ENCODE measurements at regions of chr12 and their contacts with region 1.

Region 1: GRCh38 chr12:53198486-53199110 is 8.5 kb downstream of the ITGB7 start:
- DNase-seq: no peak
- ATAC-seq: no peak
- H3K4me3 ChIP-seq: no peak overlapping the region
- H3K27ac ChIP-seq: no peak overlapping the region
- H3K4me1 ChIP-seq: no peaks in the 10 kb centered on the region
- H3K27me3 ChIP-seq: peaks cover 0 to 3% (median 0%) of the 10 kb centered on the region in 3 donors
- CTCF ChIP-seq: no peak

Region 2: DNA sequence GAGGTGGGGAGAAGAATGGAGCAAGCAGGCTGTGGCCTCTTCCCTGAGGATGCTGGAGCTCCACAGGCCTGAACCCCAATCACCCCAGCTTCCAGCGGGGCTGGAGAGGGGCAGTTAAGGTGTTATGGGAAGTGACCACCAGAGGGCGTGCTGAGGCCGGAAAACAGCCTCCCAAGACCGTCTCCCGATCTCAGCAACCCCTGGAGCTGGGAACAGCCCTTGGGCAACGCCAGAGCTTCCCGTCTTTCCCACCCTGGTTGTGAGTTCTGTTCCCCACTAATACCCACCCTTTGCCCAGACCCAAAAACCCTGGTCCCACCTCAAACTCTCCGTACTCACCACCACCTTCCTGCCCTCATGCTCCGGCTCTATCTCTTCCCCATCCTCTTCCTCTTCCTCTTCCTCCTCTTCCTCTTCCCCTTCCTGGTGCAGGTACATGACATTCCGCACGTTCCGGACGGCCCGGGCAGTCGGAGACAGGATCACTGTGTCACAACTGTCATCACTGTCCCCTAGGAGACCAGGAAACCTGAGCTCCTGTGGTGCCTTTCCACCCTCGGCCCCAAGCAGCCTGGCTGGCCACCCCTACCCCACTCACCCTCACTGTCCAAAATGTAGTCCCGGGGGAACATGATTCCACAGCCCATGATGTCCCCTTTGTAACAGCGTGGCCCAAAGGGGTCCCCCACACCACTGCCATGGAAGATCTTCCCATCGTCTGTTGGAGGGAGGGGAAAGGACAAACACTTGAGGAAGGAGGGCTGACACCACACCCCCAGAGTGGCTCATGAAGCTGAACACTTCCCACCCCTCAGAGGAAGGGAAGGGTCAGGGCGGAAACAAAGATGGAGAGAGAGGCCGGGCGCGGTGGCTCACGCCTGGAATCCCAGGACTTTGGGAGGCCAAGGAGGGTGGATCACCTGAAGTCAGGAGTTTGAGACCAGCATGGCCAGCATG is 132.3 kb before region 1 on chr12:
- intact Hi-C with region 1: loop called (anchors 1 to 5 kb)
- DNase-seq: peak; percentile 82 to 93
- ATAC-seq: peak; percentile 64 to 76 (median 72)
- H3K4me3 ChIP-seq: peak overlapping the region; percentile 22
- H3K27ac ChIP-seq: peak overlapping the region; percentile 61
- H3K4me1 ChIP-seq: peaks cover 20% of the 10 kb centered on the region
- H3K27me3 ChIP-seq: no peaks in the 10 kb centered on the region
- CTCF ChIP-seq: peak; percentile 90

Region 3: GRCh38 chr12:53159195-53159839 is 39.3 kb before region 1 on chr12:
- intact Hi-C with region 1: loop called (anchors 1 to 5 kb)
- DNase-seq: peak; percentile 85 to 89
- ATAC-seq: peak; percentile 76 to 92 (median 88)
- H3K4me3 ChIP-seq: no peak overlapping the region
- H3K27ac ChIP-seq: no peak overlapping the region
- H3K4me1 ChIP-seq: no peaks in the 10 kb centered on the region
- H3K27me3 ChIP-seq: no peaks in the 10 kb centered on the region
- CTCF ChIP-seq: peak; percentile 92

Measured in psoas muscle (tissue), 8 donors.